Mammary epithelial cell (primary cell): ENCODE measurements at regions of chrX and their contacts with region 1.

Region 1: GRCh38 chrX:6134255-6134654 is 94.4 kb downstream of the NLGN4X start:
- DNase-seq: no peak
- H3K4me3 ChIP-seq: no peak overlapping the region
- H3K27ac ChIP-seq: no peak overlapping the region
- H3K4me1 ChIP-seq: no peaks in the 10 kb centered on the region
- H3K27me3 ChIP-seq: no peaks in the 10 kb centered on the region
- CTCF ChIP-seq: no peak

Region 2: GRCh38 chrX:6175914-6176313 is 41.7 kb after region 1 on chrX:
- CTCF ChIA-PET with region 1: no interaction called
- dilution Hi-C with region 1: loop called (anchors 5 kb)
- in situ Hi-C with region 1: no loop called
- intact Hi-C with region 1: no loop called
- DNase-seq: no peak
- H3K4me3 ChIP-seq: no peak overlapping the region
- H3K27ac ChIP-seq: no peak overlapping the region
- H3K4me1 ChIP-seq: no peaks in the 10 kb centered on the region
- H3K27me3 ChIP-seq: no peaks in the 10 kb centered on the region
- CTCF ChIP-seq: no peak

Region 3: DNA sequence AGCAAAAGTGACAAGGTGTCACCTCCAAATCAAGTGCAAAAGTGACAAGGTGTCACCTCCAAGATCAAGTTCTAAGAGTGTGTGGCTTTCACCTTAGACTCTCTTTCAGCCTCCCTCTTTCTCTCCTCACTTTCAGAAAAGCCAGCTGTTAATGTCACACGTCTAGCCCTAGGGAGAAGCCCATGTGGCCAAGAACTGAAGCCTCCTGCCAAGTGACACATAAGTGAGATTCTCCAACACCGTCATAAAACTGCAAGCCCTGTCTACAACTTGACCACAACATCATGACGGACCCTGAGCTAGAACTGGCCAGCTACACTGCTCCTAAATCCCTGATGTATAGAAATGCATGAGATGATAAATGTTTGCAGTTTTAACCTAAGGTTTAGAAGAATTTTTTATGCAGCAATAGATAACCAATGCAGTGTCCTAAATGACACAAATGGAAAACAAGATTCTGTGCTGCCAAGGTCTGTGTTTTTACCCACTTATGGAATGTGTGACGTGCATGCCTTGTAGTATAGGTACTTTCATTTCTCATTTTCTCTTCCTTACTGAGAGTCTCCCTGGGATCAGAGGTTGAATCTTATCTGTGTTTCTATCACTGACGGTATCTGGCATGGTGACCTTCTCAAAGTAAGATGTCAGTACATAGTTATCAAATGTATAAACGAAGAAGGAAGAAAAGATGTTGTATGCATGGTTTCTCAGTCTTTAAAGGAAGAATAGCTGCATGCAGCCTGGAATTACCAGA is 69.4 kb after region 1 on chrX:
- CTCF ChIA-PET with region 1: no interaction called
- dilution Hi-C with region 1: no loop called
- in situ Hi-C with region 1: no loop called
- intact Hi-C with region 1: no loop called
- DNase-seq: no peak
- H3K4me3 ChIP-seq: no peak overlapping the region
- H3K27ac ChIP-seq: no peak overlapping the region
- H3K4me1 ChIP-seq: no peaks in the 10 kb centered on the region
- H3K27me3 ChIP-seq: no peaks in the 10 kb centered on the region
- CTCF ChIP-seq: no peak